ENCODE measurements at regions of chr1 and their contacts with region 1.

Region 1: GRCh38 chr1:147890177-147890790 is 12.3 kb upstream of the GJA8 start:
- DNase-seq: peak; percentile 29
- ATAC-seq: peak; percentile 77
- H3K4me3 ChIP-seq: no peak overlapping the region
- H3K27ac ChIP-seq: no peak overlapping the region
- H3K4me1 ChIP-seq: no peaks in the 10 kb centered on the region
- H3K27me3 ChIP-seq: peaks cover 4% of the 10 kb centered on the region
- CTCF ChIP-seq: peak; percentile 34
- POLR2A ChIP-seq: no peak
- RAD21 ChIP-seq: peak; percentile 46

Region 2: GRCh38 chr1:147273409-147274336 is 616.6 kb before region 1 on chr1:
- CTCF ChIA-PET with region 1: no interaction called
- POLR2A ChIA-PET with region 1: no interaction called
- dilution Hi-C with region 1: no loop called
- in situ Hi-C with region 1: no loop called
- intact Hi-C with region 1: loop called (anchors 1 kb)
- DNase-seq: peak; percentile 87
- ATAC-seq: peak; percentile 90
- H3K4me3 ChIP-seq: no peak overlapping the region
- H3K27ac ChIP-seq: peak overlapping the region; percentile 51; the same call in 1 of the 2 replicates
- H3K4me1 ChIP-seq: peaks cover 6% of the 10 kb centered on the region
- H3K27me3 ChIP-seq: no peaks in the 10 kb centered on the region
- CTCF ChIP-seq: peak; percentile 59
- POLR2A ChIP-seq: no peak
- RAD21 ChIP-seq: peak; percentile 73

Region 3: DNA sequence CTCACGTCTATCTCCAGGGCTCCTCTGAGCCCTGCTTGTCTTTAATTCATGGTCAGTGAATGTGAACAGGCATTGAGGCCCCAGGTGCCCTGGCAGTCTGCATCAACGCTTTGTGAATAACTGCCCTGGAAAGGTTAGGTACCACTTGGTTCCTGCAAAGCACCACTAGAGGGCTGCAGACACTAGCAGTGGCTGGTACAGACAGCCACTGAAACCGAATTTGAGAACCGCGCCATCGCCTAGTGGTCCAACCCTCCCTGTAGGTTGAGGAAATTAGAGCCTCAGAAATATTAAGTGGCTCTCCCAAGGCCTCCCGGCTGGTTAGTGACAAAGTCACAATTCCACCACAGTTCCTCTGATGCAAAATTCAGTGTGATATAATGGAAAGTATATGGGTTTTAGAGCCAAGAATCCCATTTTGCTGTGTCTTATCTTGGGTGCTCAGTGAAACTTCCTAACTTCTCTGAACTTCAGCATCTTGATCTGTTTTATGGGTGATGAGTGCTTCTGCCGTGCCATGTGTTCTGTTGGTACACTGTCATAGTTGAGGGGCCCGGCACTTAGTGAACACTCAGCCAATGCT is 395.2 kb before region 1 on chr1:
- CTCF ChIA-PET with region 1: interaction called, 4 read pairs
- POLR2A ChIA-PET with region 1: no interaction called
- dilution Hi-C with region 1: no loop called
- in situ Hi-C with region 1: loop called (anchors 25 kb)
- intact Hi-C with region 1: loop called (anchors 2 kb)
- DNase-seq: peak; percentile 77
- ATAC-seq: peak; percentile 94
- H3K4me3 ChIP-seq: no peak overlapping the region
- H3K27ac ChIP-seq: no peak overlapping the region
- H3K4me1 ChIP-seq: no peaks in the 10 kb centered on the region
- H3K27me3 ChIP-seq: peaks cover 2% of the 10 kb centered on the region
- CTCF ChIP-seq: peak; percentile 99
- POLR2A ChIP-seq: peak; percentile 51
- RAD21 ChIP-seq: peak; percentile 100

Region 4: GRCh38 chr1:147640553-147641165 is 249.6 kb before region 1 on chr1:
- CTCF ChIA-PET with region 1: no interaction called
- POLR2A ChIA-PET with region 1: no interaction called
- dilution Hi-C with region 1: no loop called
- in situ Hi-C with region 1: loop called (anchors 10 kb)
- intact Hi-C with region 1: loop called (anchors 1 kb)
- DNase-seq: peak; percentile 84
- ATAC-seq: peak; percentile 99
- H3K4me3 ChIP-seq: no peak overlapping the region
- H3K27ac ChIP-seq: no peak overlapping the region
- H3K4me1 ChIP-seq: no peaks in the 10 kb centered on the region
- H3K27me3 ChIP-seq: no peaks in the 10 kb centered on the region
- CTCF ChIP-seq: peak; percentile 94
- POLR2A ChIP-seq: no peak
- RAD21 ChIP-seq: peak; percentile 66

Region 5: GRCh38 chr1:147904726-147905125 is 14.4 kb after region 1 on chr1:
- CTCF ChIA-PET with region 1: interaction called, 10 read pairs
- POLR2A ChIA-PET with region 1: no interaction called
- dilution Hi-C with region 1: no loop called
- in situ Hi-C with region 1: no loop called
- intact Hi-C with region 1: loop called (anchors 1 kb)
- DNase-seq: no peak
- ATAC-seq: no peak
- H3K4me3 ChIP-seq: no peak overlapping the region
- H3K27ac ChIP-seq: no peak overlapping the region
- H3K4me1 ChIP-seq: no peaks in the 10 kb centered on the region
- H3K27me3 ChIP-seq: peaks cover 1% of the 10 kb centered on the region
- CTCF ChIP-seq: no peak
- POLR2A ChIP-seq: no peak
- RAD21 ChIP-seq: no peak

Measured in IMR-90 (cell line).